Astrocyte of the cerebellum (primary cell): ENCODE measurements at regions of chr15 and their contacts with region 1.

Region 1: GRCh38 chr15:79463043-79463780 is 31.1 kb downstream of the MINAR1 start:
- DNase-seq: no peak
- H3K4me3 ChIP-seq: no peak overlapping the region
- CTCF ChIP-seq: no peak

Region 2: GRCh38 chr15:79523266-79523665 is 60.1 kb after region 1 on chr15:
- in situ Hi-C with region 1: no loop called
- DNase-seq: no peak
- H3K4me3 ChIP-seq: no peak overlapping the region
- CTCF ChIP-seq: no peak

Region 3: DNA sequence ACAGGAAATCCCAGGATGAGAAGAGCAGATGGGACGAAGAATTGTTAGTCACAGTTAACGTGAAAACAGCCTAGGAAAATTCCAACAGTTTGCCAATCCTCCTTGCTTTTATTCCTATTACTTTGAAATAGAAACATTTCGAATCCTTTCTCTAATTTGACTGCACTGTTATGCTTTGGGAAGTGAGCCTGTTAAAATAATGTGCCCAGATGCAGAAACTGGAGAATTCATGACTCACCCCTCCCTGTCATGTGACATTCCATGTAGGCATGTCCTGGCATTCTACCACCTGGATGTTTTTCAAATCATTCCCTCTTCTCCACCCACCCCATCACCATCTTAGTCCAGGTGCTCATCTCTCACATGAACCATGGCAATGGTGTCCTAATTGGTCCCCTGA is 76.2 kb after region 1 on chr15:
- in situ Hi-C with region 1: loop called (anchors 5 kb)
- DNase-seq: no peak
- H3K4me3 ChIP-seq: no peak overlapping the region
- CTCF ChIP-seq: no peak